MCF 10A (cell line): ENCODE measurements at regions of chr7 and their contacts with region 1.

Region 1: GRCh38 chr7:129163875-129164544 is 19.5 kb downstream of the TSPAN33 start:
- DNase-seq: peak; percentile 44
- H3K4me3 Mint-ChIP-seq: no peak overlapping the region
- H3K27ac Mint-ChIP-seq: no peak overlapping the region
- H3K4me1 Mint-ChIP-seq: no peaks in the 10 kb centered on the region
- H3K27me3 Mint-ChIP-seq: no peaks in the 10 kb centered on the region
- CTCF ChIP-seq: peak; percentile 62

Region 2: GRCh38 chr7:129144095-129144833 is 19.7 kb before region 1 on chr7 and contains the start of gene TSPAN33:
- CTCF ChIA-PET with region 1: interaction called, 23 read pairs
- POLR2A ChIA-PET with region 1: no interaction called
- intact Hi-C with region 1: no loop called
- DNase-seq: peak; percentile 75
- H3K4me3 Mint-ChIP-seq: peak within 1 kb of the TSS; percentile 68
- H3K27ac Mint-ChIP-seq: no peak within 1 kb of the TSS
- H3K4me1 Mint-ChIP-seq: peaks cover 7% of the 10 kb centered on the region
- H3K27me3 Mint-ChIP-seq: peaks cover 69% of the 10 kb centered on the region
- CTCF ChIP-seq: no peak
- total RNA-seq, gene TSPAN33: 1.7 TPM in 2 replicates

Region 3: GRCh38 chr7:129210256-129210988 is 46.4 kb after region 1 on chr7:
- CTCF ChIA-PET with region 1: interaction called, 72 read pairs
- POLR2A ChIA-PET with region 1: interaction called, 3 read pairs
- intact Hi-C with region 1: loop called (anchors 1 kb)
- DNase-seq: peak; percentile 69
- H3K4me3 Mint-ChIP-seq: no peak overlapping the region
- H3K27ac Mint-ChIP-seq: no peak overlapping the region
- H3K4me1 Mint-ChIP-seq: no peaks in the 10 kb centered on the region
- H3K27me3 Mint-ChIP-seq: peaks cover 21% of the 10 kb centered on the region
- CTCF ChIP-seq: peak; percentile 79